Activated CD4-positive, alpha-beta T cell treated with anti-CD3 and anti-CD28 coated beads, Interleukin-2, amount 10 ng/mL, durations not matched to agents 7 days and 5 days (primary cell): ENCODE measurements at regions of chr12 and their contacts with region 1.

Region 1: GRCh38 chr12:6959058-6959804 is 8.1 kb downstream of the PTPN6 start:
- DNase-seq: peak; percentile 80
- H3K4me3 Mint-ChIP-seq: peak overlapping the region; percentile 83
- H3K27ac Mint-ChIP-seq: peak overlapping the region; percentile 93
- H3K4me1 Mint-ChIP-seq: peaks cover 92% of the 10 kb centered on the region
- H3K27me3 Mint-ChIP-seq: no peaks in the 10 kb centered on the region

Region 2: GRCh38 chr12:6944381-6945186 is 14.6 kb before region 1 on chr12:
- CTCF ChIA-PET with region 1: interaction called, 388 read pairs
- POLR2A ChIA-PET with region 1: interaction called, 36 read pairs
- DNase-seq: peak; percentile 92
- H3K4me3 Mint-ChIP-seq: peak overlapping the region; percentile 97
- H3K27ac Mint-ChIP-seq: peak overlapping the region; percentile 96
- H3K4me1 Mint-ChIP-seq: peaks cover 68% of the 10 kb centered on the region
- H3K27me3 Mint-ChIP-seq: no peaks in the 10 kb centered on the region

Region 3: GRCh38 chr12:6987948-6988553 is 28.8 kb after region 1 on chr12:
- CTCF ChIA-PET with region 1: no interaction called
- POLR2A ChIA-PET with region 1: no interaction called
- DNase-seq: no peak
- H3K4me3 Mint-ChIP-seq: no peak overlapping the region
- H3K27ac Mint-ChIP-seq: no peak overlapping the region
- H3K4me1 Mint-ChIP-seq: no peaks in the 10 kb centered on the region
- H3K27me3 Mint-ChIP-seq: no peaks in the 10 kb centered on the region

Region 4: GRCh38 chr12:7092229-7092985 is 133.2 kb after region 1 on chr12 and contains the start of gene C1R:
- CTCF ChIA-PET with region 1: no interaction called
- POLR2A ChIA-PET with region 1: no interaction called
- DNase-seq: peak; percentile 80
- H3K4me3 Mint-ChIP-seq: peak within 1 kb of the TSS; percentile 71
- H3K27ac Mint-ChIP-seq: peak within 1 kb of the TSS; percentile 80
- H3K4me1 Mint-ChIP-seq: peaks cover 8% of the 10 kb centered on the region
- H3K27me3 Mint-ChIP-seq: peaks cover 4% of the 10 kb centered on the region
- total RNA-seq, gene C1R: 2.2 to 3.5 TPM